ENCODE measurements at regions of chr19 and their contacts with region 1.

Region 1: GRCh38 chr19:29671393-29672160 is 6.3 kb downstream of the PLEKHF1 start:
- DNase-seq: peak; percentile 73 to 96 (median 80)
- H3K4me3 ChIP-seq: peak overlapping the region; percentile 54
- H3K4me3 Mint-ChIP-seq: peak overlapping the region; percentile 61 to 95 (median 88)
- H3K27ac ChIP-seq: peak overlapping the region; percentile 77
- H3K27ac Mint-ChIP-seq: peak overlapping the region; percentile 93 to 100 (median 98)
- H3K4me1 ChIP-seq: peaks cover 99% of the 10 kb centered on the region
- H3K4me1 Mint-ChIP-seq: peaks cover 77 to 96% (median 87%) of the 10 kb centered on the region in 3 donors
- H3K27me3 ChIP-seq: no peaks in the 10 kb centered on the region
- H3K27me3 Mint-ChIP-seq: no peaks in the 10 kb centered on the region

Region 2: DNA sequence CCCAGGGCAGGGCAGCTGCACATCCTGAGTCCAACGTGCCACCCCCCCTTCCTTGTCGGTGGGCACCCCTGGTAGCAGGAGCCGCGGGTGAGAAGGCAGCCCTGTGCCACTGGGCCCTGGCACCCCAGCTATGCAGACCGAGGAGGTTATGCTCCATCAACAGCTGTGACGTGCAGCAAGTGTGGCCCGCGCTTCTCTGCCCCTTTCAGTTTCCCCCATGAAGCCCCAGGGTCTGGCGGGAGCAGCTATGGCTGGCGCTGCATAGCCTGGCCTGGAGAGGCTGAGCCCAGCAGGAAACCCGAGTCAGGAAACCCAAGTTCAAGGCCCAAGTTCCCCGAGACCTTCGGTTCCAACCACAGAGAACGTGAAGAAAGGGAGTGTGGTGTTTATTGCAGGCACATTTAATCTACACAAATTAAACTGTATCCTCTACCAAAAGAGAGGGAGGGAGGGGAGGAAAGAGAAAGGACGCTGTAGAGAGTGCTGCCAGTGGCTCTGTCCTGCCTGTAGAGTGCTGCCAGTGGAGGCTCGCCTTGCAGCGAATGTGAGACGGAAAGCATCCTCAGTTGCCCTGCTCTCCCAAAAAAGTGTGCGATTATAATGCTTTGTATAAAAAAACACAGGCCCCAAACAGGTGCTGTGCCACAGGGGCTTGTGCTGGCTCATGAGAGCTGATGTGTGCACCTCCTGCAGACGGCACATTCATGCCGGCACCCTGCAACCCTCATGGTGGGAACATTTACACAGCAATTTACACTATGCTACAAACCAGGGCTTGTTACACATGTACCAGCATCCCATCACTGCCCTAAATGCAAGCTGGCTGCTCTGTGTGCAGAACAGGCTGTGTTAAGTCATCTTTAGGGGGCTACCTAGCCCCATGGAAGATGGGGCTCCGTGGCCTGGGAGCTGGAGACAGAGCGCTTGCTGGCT is 49.2 kb before region 1 on chr19:
- CTCF ChIA-PET with region 1: interaction called, 56 read pairs
- POLR2A ChIA-PET with region 1: interaction called, 15 read pairs
- DNase-seq: peak; percentile 30 to 64 (median 38)
- H3K4me3 ChIP-seq: peak overlapping the region; percentile 0
- H3K4me3 Mint-ChIP-seq: peak overlapping the region; percentile 33 to 84 (median 76)
- H3K27ac ChIP-seq: no peak overlapping the region
- H3K27ac Mint-ChIP-seq: peak overlapping the region; percentile 85 to 97 (median 97)
- H3K4me1 ChIP-seq: peaks cover 54% of the 10 kb centered on the region
- H3K4me1 Mint-ChIP-seq: peaks cover 54 to 63% (median 61%) of the 10 kb centered on the region in 3 donors
- H3K27me3 ChIP-seq: no peaks in the 10 kb centered on the region
- H3K27me3 Mint-ChIP-seq: no peaks in the 10 kb centered on the region

Region 3: GRCh38 chr19:29687244-29687896 is 15.8 kb after region 1 on chr19:
- CTCF ChIA-PET with region 1: interaction called, 85 read pairs
- POLR2A ChIA-PET with region 1: interaction called, 14 read pairs
- DNase-seq: no peak
- H3K4me3 ChIP-seq: no peak overlapping the region
- H3K4me3 Mint-ChIP-seq: peak overlapping the region in 1 of 7 donors; percentile 65
- H3K27ac ChIP-seq: peak overlapping the region; percentile 67
- H3K27ac Mint-ChIP-seq: peak overlapping the region in 2 of 8 donors; percentile 47 to 57
- H3K4me1 ChIP-seq: peaks cover 10% of the 10 kb centered on the region
- H3K4me1 Mint-ChIP-seq: peaks cover 32 to 38% (median 37%) of the 10 kb centered on the region in 3 donors
- H3K27me3 ChIP-seq: no peaks in the 10 kb centered on the region
- H3K27me3 Mint-ChIP-seq: peaks cover 0 to 1% of the 10 kb centered on the region in 2 donors

Region 4: DNA sequence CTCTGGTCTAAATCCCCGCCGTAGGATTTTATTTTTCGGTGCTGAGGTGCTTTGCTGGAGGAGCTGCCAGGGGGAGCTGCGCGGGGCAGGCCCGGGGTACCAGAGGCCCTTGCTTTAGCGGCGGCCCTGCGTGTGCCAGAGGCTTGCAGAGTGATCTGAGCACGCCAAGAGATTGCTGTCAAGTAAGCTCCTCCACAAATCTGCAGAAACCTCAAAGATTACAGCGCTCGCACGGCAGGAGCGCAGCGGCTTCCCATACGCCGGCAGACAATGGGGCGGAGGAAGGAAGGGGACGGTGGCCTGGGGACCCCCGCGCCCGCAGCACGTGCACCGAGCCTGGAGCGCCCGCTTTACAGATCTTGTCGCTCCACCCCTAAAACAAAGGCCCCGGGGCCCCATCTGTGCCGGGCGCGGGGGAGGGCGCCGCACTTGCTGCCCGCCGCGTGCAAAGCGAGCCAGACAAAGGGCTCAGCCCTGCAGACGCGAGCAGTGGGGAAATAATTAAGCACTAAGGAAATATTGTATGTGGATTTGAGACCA is 52.6 kb after region 1 on chr19:
- CTCF ChIA-PET with region 1: no interaction called
- POLR2A ChIA-PET with region 1: no interaction called
- DNase-seq: peak in 1 of 5 donors; percentile 52
- H3K4me3 ChIP-seq: no peak overlapping the region
- H3K4me3 Mint-ChIP-seq: peak overlapping the region; percentile 38 to 83 (median 68)
- H3K27ac ChIP-seq: no peak overlapping the region
- H3K27ac Mint-ChIP-seq: peak overlapping the region in 2 of 8 donors; percentile 11 to 23
- H3K4me1 ChIP-seq: no peaks in the 10 kb centered on the region
- H3K4me1 Mint-ChIP-seq: peaks cover 6 to 17% (median 12%) of the 10 kb centered on the region in 3 donors
- H3K27me3 ChIP-seq: peaks cover 7% of the 10 kb centered on the region
- H3K27me3 Mint-ChIP-seq: peaks cover 17 to 27% of the 10 kb centered on the region in 2 donors

Measured in CD8-positive, alpha-beta memory T cell (primary cell).